ENCODE measurements at regions of chr6 and their contacts with region 1.

Region 1: DNA sequence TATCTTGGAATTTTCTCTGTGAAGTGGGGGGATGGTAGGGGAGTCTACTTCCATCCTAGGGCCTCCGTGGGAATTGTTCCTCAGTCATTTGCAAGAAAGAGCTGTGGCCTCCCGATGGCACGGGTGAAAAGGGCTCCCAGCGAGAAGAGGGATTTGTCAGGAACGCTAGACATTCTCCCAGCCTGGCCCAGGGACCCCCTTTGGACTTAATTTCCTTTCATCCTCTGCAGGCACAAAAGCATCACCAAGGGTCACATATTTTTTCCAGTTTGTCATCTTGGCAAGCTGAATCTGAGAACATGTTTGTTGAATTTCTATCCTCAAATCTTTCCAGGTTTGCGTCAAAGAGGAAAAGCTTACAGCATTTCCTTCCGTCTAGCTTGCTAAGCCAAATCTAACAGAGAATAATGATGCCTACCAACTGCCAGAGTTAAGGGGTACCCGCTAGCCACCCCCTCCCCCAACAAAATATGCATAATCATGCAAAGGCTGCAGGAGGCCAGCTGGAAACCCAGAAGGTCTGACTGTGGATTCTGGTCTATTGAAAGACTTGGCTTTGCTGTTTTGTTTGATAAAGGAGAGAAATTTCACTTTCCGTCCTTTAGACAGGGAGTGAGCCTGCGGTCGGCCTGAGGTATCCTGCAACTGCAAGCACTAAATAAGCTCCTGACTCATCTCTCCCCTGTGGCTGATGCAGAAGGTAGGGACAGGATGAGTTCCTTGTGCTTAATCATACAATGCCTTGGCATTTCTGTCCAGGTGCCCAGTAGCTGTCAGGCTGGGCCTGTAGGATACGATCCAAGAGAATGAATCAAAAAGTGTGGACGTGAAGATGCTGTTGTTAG is 23.1 kb downstream of the PSMG4 start:
- DNase-seq: peak in 2 of 4 donors; percentile 12 to 14
- ATAC-seq: no peak
- H3K4me3 ChIP-seq: no peak overlapping the region
- H3K27ac ChIP-seq: peak overlapping the region in 2 of 4 donors; percentile 3 to 38
- H3K4me1 ChIP-seq: no peaks in the 10 kb centered on the region
- H3K27me3 ChIP-seq: no peaks in the 10 kb centered on the region
- CTCF ChIP-seq: no peak
- POLR2A ChIP-seq: no peak

Region 2: GRCh38 chr6:3456755-3457466 is 175.1 kb after region 1 on chr6 and contains the start of gene SLC22A23:
- intact Hi-C with region 1: loop called (anchors 10 kb)
- DNase-seq: peak; percentile 87 to 90 (median 89)
- ATAC-seq: peak; percentile 90
- H3K4me3 ChIP-seq: peak within 1 kb of the TSS; percentile 26 to 66
- H3K27ac ChIP-seq: peak within 1 kb of the TSS; percentile 37 to 68 (median 62)
- H3K4me1 ChIP-seq: peaks cover 21% of the 10 kb centered on the region
- H3K27me3 ChIP-seq: no peaks in the 10 kb centered on the region
- CTCF ChIP-seq: peak; percentile 40 to 99 (median 92)
- POLR2A ChIP-seq: peak; percentile 32 to 63 (median 62)
- total RNA-seq, gene SLC22A23: 20.4 to 32.2 TPM

Region 3: GRCh38 chr6:3518356-3519225 is 236.7 kb after region 1 on chr6:
- intact Hi-C with region 1: loop called (anchors 10 kb)
- DNase-seq: no peak
- ATAC-seq: no peak
- H3K4me3 ChIP-seq: no peak overlapping the region
- H3K27ac ChIP-seq: no peak overlapping the region
- H3K4me1 ChIP-seq: peaks cover 6% of the 10 kb centered on the region
- H3K27me3 ChIP-seq: no peaks in the 10 kb centered on the region
- CTCF ChIP-seq: no peak
- POLR2A ChIP-seq: no peak

Region 4: DNA sequence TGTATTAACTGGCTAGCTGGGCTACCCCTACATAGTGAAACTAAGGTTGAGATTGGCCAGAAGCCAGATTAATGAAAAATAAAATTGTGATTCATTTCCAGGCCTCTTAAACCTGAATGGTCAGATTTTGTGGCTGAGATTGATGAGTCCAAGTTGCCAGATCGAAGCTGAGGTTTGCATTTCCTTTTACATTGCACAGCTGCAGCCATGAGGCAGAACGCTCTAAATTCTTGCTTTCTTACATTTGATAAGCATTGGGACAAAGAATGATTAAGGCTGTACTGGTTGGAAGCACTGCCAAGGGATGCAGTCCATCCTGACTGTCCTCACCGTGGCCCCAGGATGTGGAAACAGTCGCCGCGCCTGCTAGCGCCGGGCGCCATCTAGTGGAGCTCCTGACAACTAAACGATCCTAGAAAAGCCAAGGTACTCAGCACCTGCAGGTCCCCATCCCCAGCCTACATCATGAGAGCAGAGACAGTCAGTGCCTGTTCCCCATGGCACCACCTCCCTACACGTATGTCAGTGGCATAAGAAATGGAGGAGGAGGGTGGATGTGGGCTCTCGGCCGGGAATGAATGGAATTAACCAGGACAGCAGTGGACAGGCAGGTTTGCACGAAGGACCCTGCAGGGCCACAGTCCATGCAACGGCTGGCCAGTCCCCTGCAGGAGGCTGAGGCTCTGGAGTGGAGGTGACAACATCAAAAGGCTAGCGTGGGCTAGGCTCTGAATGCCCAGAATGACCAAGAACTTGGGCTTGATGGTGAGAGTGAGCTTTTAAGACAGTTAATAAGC is 450.7 kb after region 1 on chr6:
- intact Hi-C with region 1: loop called (anchors 5 kb)
- DNase-seq: peak; percentile 78 to 82 (median 80)
- ATAC-seq: peak; percentile 81
- H3K4me3 ChIP-seq: no peak overlapping the region
- H3K27ac ChIP-seq: peak overlapping the region in 2 of 4 donors; percentile 31 to 45
- H3K4me1 ChIP-seq: peaks cover 6% of the 10 kb centered on the region
- H3K27me3 ChIP-seq: no peaks in the 10 kb centered on the region
- CTCF ChIP-seq: peak; percentile 75 to 92 (median 83)
- POLR2A ChIP-seq: no peak